ENCODE measurements at regions of chr10 and their contacts with region 1.

Region 1: DNA sequence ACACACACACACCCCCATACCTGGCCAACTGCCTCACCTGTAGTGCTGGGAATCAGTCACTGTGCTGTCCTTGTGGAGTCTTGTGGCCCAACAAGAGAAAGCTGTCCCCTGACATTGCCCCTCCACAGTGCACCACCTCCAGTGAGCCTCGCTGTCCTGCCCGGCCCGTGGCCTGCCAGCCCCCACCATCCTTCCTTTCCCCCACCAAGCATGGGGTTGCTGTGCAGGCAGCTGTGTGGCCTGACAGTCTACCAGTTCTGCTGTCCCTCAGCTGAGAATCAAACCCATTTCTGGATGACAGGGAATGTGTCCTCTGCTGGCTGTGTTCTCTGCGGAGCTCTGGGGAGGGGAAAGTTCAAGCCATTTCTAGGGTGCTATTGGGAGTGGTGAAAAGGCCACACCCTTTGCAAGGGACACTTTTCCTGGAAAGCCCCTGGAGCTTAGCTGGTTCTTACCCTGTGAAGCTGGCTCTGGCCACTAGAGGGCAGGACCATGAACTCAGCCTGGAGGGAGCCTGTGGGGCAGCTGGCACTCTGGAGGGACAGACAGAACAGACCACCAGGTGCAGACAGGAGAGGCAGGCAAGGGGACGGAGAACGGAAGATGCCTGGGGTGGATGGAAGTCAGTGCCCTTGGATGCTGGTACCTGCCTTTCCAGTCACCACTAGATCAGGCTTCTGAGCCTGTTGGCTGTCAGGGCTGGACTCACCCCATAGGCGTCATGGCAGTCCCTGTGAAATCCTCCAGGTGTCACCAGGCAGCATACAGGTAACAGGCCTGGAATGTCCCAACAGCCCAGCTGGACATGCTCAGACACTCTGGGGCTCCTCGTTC is 10.5 kb upstream of the MTPAP start:
- DNase-seq: peak; percentile 70
- H3K4me3 Mint-ChIP-seq: no peak overlapping the region
- H3K27ac Mint-ChIP-seq: no peak overlapping the region
- H3K4me1 Mint-ChIP-seq: peaks cover 11% of the 10 kb centered on the region
- H3K27me3 Mint-ChIP-seq: peaks cover 18% of the 10 kb centered on the region

Region 2: GRCh38 chr10:30348378-30348776 is 11.2 kb before region 1 on chr10:
- CTCF ChIA-PET with region 1: interaction called, 63 read pairs
- POLR2A ChIA-PET with region 1: interaction called, 5 read pairs
- DNase-seq: no peak
- H3K4me3 Mint-ChIP-seq: peak overlapping the region; percentile 98
- H3K27ac Mint-ChIP-seq: peak overlapping the region; percentile 86
- H3K4me1 Mint-ChIP-seq: peaks cover 42% of the 10 kb centered on the region
- H3K27me3 Mint-ChIP-seq: peaks cover 1% of the 10 kb centered on the region

Region 3: DNA sequence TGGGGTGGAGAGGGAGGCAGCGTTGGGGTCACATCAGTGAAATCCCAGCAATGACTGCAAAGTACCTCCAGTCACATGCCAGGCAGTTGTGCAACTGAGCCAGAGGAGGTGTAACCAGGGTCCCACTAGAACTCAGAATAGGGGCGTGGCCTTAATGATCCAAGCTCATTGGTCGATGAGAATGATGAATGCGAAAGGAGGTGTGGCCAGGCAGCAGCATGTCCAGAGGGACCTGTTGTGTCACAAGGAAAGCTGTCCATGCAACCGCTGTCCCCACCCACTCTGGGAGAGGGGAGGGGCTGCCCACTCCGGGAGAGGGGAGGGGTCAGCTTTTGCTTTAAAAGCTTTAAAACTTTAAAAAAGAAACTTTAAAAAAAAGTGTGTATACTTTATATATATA is 14.8 kb after region 1 on chr10:
- CTCF ChIA-PET with region 1: interaction called, 20 read pairs
- POLR2A ChIA-PET with region 1: no interaction called
- DNase-seq: no peak
- H3K4me3 Mint-ChIP-seq: no peak overlapping the region
- H3K27ac Mint-ChIP-seq: peak overlapping the region; percentile 71
- H3K4me1 Mint-ChIP-seq: peaks cover 35% of the 10 kb centered on the region
- H3K27me3 Mint-ChIP-seq: peaks cover 21% of the 10 kb centered on the region

Region 4: DNA sequence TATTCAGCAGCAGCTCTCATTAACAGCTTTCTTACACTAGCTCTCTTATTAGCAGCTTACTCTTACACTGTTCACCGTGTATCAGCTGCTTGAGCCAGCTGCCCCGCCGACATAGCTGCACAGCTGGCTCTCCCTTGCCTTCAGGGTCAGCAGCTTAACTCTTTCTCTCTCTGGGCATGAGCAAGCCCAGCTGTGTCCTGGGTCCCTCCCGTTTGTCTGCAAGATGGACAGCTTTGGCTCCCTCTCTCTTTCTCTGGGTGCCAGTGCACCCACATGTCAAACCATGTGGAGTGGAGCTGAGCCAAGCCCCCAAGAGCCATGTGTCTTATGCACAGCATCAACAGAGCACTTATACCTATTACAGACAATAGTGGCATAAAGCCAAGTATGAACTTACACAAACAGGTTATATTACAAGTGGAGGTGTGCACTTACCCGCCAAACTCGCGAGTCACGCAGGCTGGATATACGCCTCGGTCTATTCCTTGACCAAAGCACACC is 25.2 kb after region 1 on chr10:
- CTCF ChIA-PET with region 1: interaction called, 17 read pairs
- POLR2A ChIA-PET with region 1: no interaction called
- DNase-seq: no peak
- H3K4me3 Mint-ChIP-seq: no peak overlapping the region
- H3K27ac Mint-ChIP-seq: no peak overlapping the region
- H3K4me1 Mint-ChIP-seq: no peaks in the 10 kb centered on the region
- H3K27me3 Mint-ChIP-seq: peaks cover 46% of the 10 kb centered on the region